Left cardiac atrium (tissue), 4 donors: ENCODE measurements at regions of chr10 and their contacts with region 1.

Region 1: GRCh38 chr10:73576178-73576889 is 14.8 kb downstream of the USP54 start:
- DNase-seq: peak; percentile 41
- ATAC-seq: peak; percentile 74 to 91

Region 2: GRCh38 chr10:73306171-73306708 is 270.1 kb before region 1 on chr10:
- intact Hi-C with region 1: no loop called
- DNase-seq: no peak
- ATAC-seq: no peak

Region 3: GRCh38 chr10:73644015-73644743 is 67.8 kb after region 1 on chr10:
- intact Hi-C with region 1: loop called in 1 of 2 experiments (anchors 5 kb)
- DNase-seq: peak; percentile 58
- ATAC-seq: peak; percentile 16 to 28

Region 4: GRCh38 chr10:73785221-73785720 is 208.9 kb after region 1 on chr10 and contains the start of gene ZSWIM8:
- intact Hi-C with region 1: no loop called
- DNase-seq: peak; percentile 90
- ATAC-seq: peak; percentile 90 to 92
- total RNA-seq, gene ZSWIM8: 50.7 to 61.6 TPM

Region 5: DNA sequence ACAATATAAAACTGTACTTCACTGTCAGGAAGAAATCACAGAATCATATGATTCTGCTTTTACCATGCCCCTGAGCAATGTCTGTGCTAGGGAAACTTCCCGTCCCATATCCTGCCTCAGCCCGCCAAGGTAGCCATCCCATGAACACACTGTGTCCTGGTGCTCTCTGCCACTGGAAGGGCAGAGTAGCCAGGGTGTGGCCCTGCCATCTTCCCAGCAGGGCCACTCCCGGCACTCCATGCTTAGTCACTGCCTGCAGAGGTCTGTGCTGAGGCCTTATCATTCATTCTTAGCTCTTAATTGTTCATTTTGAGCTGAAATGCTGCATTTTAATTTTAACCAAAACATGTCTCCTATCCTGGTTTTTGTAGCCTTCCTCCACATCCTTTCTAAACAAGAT is 542.5 kb after region 1 on chr10:
- intact Hi-C with region 1: no loop called
- DNase-seq: peak; percentile 27
- ATAC-seq: peak in 1 of 2 donors; percentile 36